ENCODE measurements at regions of chr3 and their contacts with region 1.

Region 1: GRCh38 chr3:102887431-102887830 is 452.6 kb downstream of the ZPLD1 start:
- DNase-seq: no peak
- ATAC-seq: no peak
- H3K4me3 ChIP-seq: no peak overlapping the region
- H3K27ac ChIP-seq: no peak overlapping the region
- H3K4me1 ChIP-seq: no peaks in the 10 kb centered on the region
- H3K27me3 ChIP-seq: no peaks in the 10 kb centered on the region
- CTCF ChIP-seq: no peak
- POLR2A ChIP-seq: no peak

Region 2: DNA sequence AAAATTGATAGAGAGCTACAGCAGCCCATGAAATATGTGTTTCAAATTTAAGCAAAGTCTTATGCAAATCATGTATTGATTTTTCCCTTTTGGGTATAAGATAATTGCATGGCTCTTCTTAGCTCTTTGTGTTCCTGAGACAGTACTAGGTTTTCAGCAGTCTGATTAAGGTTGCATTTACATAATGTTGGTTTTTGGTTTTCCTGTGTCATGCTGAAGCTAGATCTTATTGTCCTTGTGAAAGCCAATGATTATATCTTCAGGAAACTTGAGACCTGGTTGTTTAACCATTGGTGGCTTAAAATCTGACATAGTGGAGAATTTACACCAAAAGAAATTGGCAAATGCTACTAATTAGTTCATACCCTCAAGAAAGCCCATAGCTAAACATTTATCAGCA is 60.0 kb before region 1 on chr3:
- intact Hi-C with region 1: no loop called
- DNase-seq: no peak
- ATAC-seq: no peak
- H3K4me3 ChIP-seq: no peak overlapping the region
- H3K27ac ChIP-seq: no peak overlapping the region
- H3K4me1 ChIP-seq: no peaks in the 10 kb centered on the region
- H3K27me3 ChIP-seq: no peaks in the 10 kb centered on the region
- CTCF ChIP-seq: no peak
- POLR2A ChIP-seq: no peak

Region 3: DNA sequence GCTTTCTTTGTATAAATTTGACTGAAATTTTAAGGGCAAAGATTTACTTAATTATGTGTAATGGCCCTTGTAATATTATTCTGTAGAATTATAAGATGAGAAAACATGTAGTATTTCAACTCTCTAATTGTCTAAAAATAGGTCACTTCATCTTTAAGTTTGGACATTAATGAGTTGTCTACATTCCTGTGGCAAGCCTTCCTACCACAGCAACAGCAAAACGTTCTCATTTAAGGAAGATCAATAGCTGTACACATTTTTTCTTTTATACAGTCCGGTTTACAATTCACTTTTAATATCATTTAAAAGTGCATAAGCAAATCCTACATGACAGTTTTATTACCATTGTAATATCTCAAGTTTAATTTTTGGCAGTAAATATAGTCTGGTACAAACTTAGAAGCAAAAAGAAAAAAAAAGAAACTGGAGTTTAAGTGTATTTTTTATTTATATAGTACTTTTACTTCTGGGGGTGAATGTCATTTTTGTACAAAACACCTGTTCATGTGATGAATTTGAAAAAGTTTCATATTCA is 49.1 kb after region 1 on chr3:
- intact Hi-C with region 1: loop called in 1 of 10 experiments (anchors 10 kb)
- DNase-seq: no peak
- ATAC-seq: no peak
- H3K4me3 ChIP-seq: no peak overlapping the region
- H3K27ac ChIP-seq: no peak overlapping the region
- H3K4me1 ChIP-seq: no peaks in the 10 kb centered on the region
- H3K27me3 ChIP-seq: no peaks in the 10 kb centered on the region
- CTCF ChIP-seq: no peak
- POLR2A ChIP-seq: no peak

Region 4: GRCh38 chr3:103002425-103003176 is 115.2 kb after region 1 on chr3:
- intact Hi-C with region 1: no loop called
- DNase-seq: no peak
- ATAC-seq: no peak
- H3K4me3 ChIP-seq: no peak overlapping the region
- H3K27ac ChIP-seq: no peak overlapping the region
- H3K4me1 ChIP-seq: no peaks in the 10 kb centered on the region
- H3K27me3 ChIP-seq: no peaks in the 10 kb centered on the region
- CTCF ChIP-seq: no peak
- POLR2A ChIP-seq: no peak

Measured in heart left ventricle (tissue), 16 donors.